BJ (cell line): ENCODE measurements at regions of chr22 and their contacts with region 1.

Region 1: DNA sequence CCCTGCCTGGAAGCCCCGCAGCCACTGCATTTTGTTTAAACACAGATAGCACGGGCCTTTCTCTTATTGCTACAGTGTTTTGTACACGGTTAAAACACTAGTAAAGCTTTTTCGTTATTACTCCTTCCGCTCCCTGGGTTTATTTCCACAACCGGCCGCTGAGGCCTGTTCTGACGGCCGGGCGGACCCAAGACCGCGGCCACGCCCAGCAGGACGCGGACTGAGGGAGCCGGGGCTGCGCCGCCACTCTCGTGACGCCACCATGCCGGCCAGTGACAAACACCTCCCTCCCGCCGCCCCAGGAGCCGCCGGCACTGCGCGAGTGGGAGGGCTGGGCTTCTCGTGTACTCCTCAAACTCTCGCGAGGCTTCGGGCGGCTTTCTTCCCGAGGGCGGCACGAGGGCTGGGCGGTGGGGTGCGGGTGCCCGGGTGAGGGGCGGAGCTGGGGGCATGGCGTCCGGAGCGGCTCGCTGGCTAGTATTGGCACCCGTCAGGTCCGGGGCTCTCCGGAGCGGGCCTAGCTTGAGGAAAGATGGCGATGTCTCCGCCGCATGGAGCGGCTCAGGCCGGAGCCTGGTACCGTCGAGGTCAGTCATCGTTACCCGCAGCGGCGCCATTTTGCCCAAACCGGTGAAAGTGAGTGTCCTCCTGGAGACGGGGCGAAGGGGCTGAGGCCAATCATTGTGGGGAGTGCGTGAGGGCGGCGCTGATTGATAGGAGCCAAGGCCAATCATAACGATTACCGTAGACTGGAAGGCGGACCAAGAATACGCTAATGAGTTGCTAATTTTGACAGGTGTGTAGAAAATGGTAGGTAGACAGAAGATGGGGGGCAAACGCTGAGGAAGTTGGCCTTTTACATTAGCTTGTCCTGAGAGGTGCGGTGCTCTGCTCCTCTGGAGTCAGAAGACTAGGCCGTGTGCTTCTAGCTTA is at the start of gene SMDT1:
- DNase-seq: peak; percentile 78
- H3K4me3 ChIP-seq: peak within 1 kb of the TSS; percentile 80
- H3K27me3 ChIP-seq: no peaks in the 10 kb centered on the region
- CTCF ChIP-seq: no peak
- polyA plus RNA-seq, gene SMDT1: 32.3 and 35.7 TPM in 2 replicates

Region 2: DNA sequence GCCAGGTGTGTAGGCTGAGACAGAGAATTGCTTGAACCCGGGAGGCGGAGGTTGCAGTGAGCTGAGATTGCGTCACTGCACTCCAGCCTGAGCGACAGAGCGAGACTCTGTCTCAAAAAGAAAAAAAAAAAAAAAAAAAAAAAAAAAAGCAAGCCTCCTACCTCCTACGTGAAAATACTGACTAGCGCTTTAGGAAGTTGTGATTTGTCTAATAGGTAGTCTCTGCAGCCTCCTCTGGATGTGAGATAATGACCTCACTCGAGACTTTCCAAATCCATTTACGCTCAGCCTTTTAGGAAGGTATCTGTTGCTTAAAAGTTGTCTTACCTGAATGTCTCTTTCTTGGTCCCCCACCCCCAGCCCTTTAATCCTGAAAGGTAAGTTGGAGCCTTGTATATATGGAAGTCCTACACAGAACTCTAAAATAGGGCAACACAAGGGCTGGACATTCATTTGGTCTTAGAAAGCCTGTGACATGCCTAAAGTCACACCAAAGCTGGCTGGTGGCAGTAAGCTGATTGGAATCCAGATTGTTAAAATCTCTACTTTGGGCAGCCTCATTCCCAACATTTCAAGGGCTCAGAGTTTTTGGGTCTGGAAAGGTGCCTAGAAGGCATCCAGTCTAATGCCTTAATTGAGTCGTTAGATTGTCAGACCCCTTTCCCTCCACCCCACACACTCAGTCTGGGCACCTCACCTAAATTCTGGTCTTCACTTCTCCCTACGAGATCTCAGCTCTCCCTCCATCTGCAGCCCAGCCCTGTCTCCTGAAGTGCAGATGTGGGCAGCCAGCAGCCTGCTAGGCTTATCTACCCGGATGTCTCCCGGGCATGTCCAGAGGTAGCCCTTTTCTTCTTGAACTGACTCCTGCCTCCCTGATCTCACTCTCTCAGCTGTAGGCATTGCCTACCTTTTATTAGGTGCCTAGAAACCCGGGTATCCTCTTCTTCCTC is 104.6 kb before region 1 on chr22:
- CTCF ChIA-PET with region 1: no interaction called
- POLR2A ChIA-PET with region 1: no interaction called
- DNase-seq: no peak
- H3K4me3 ChIP-seq: no peak overlapping the region
- H3K27me3 ChIP-seq: peaks cover 34% of the 10 kb centered on the region
- CTCF ChIP-seq: no peak

Region 3: DNA sequence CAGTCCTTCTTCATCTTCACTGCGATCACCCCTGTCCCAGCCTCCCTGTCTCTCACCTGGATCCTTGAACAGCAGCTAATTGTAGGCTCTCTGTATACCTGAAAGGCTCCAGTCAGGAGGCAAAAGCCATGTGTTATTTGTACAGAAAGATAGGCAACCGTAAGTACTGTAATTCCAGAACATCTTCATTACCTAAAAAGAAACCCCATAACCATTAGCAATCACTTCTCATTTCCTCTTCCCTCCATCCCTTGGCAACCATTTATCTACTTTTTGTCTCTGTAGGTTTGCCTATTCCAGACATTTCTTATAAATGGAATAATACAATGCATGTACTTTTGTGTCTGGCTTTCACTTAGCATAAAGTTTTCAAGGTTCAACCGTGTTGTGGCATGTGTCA is 26.8 kb before region 1 on chr22:
- CTCF ChIA-PET with region 1: no interaction called
- POLR2A ChIA-PET with region 1: no interaction called
- DNase-seq: no peak
- H3K4me3 ChIP-seq: no peak overlapping the region
- H3K27me3 ChIP-seq: no peaks in the 10 kb centered on the region
- CTCF ChIP-seq: no peak

Region 4: DNA sequence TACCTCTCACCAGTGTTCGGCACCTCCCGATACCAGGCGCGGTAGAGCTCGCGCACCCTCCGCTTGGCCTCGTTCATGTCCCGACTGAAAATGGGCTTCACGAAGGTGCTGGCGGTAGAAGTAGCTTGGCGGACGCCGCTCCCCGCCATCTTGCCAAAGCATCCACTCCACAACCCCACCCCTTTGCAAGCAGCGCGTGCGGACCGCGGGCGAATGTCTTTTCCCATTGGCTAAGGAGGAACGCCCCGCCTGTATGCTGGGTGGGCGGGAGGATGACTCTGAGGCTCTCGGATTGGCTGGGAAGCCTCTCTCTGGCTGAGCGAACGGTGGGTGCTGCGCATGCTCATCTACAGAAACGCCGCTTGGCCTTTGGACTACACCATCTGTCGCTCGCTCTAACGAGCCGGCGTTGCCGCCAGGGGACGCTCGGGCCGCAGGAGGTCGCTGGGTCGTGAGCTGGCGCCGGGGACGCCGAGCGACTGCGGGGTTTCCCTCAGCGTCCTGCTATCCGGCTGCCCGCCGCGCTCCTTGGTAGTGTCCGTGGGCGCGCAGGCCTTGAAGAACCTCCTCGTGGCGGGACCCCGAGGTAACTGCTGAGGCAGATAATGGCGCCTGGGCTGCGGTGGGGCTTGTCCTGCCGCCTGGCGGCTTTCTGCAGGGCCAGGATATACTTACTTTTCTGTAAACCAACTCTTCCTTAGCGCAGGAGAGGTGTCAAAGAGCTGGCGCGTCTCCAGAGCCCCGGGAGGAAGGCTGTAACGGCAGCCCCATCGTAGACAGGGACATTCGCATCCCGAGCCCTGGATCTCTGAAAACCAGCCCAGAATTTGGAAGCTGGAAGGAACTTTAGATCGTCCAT is 11.2 kb after region 1 on chr22 and contains the start of gene NDUFA6:
- CTCF ChIA-PET with region 1: interaction called, 18 read pairs
- POLR2A ChIA-PET with region 1: interaction called, 5 read pairs
- DNase-seq: peak; percentile 97
- H3K4me3 ChIP-seq: peak within 1 kb of the TSS; percentile 59
- H3K27me3 ChIP-seq: no peaks in the 10 kb centered on the region
- CTCF ChIP-seq: peak; percentile 92
- polyA plus RNA-seq, gene NDUFA6: 76.0 and 85.6 TPM in 2 replicates

Region 5: DNA sequence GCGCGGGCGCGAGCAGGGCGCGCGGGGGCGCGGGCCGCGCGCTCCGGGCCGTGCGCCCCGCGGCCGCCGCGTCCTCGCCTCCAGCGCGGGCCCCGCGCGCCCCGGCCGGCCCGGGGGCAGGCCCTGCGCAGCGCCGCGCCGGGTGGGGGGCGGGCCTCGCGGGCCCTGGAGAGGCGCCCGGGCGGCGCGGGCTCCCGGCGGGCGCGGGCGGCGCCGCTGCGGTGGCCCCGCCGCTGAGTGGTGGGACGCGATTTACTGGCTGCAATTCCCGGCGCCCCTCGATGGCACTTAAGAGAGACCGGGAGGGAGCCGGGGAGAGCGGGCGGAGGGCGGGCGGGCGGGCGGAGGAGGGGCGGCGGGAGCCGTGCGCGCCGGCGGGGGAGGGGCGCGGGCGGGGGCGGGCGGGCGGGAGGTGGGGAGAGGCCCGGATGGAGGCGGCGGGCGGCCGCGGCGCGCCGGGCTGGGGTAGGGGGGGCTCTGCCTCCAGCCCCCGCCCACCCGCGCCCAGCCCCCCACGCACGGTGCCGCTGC is 264.0 kb after region 1 on chr22:
- CTCF ChIA-PET with region 1: no interaction called
- POLR2A ChIA-PET with region 1: interaction called, 19 read pairs
- DNase-seq: no peak
- H3K4me3 ChIP-seq: peak overlapping the region; percentile 49
- H3K27me3 ChIP-seq: no peaks in the 10 kb centered on the region
- CTCF ChIP-seq: no peak

Region 6: DNA sequence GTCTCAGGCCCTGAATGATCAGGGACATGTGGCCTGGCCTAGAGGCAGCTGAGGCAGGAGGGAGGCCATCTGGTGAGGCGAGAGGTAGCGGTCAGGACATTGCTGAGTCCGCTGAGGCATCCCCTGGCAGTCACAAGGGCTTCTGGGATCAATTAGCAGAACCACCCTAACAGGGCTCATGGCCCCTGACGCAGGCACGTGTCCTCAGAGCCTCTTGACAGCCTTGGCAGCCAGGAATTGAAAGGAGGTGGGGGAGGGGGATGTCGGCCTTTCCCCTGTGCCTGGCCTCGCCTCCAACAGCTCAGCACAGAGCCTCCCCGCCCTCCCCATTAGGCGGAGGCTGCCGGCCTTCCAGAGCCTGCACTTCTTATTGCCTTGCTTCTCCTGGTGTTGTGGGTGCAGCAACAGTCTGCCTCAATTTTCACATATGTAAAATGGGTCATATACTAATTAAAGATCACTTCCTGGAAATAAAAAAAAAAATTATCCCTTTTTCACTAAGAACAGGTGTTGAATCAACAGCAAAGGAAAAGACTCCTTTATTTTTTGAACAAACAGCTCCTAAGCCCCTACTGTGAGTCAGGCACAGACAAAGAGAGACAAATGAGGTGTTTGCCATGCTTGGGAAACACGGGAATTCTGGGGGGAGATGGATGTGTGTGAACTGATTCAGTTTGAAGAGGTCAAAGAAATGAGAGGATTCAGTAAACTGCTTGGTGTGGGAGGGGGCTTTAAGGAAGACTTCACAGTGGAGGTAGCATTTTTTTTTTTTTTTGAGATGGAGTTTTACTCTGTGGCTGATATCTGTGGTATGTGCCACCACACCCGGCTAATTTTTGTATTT is 297.3 kb after region 1 on chr22:
- CTCF ChIA-PET with region 1: no interaction called
- POLR2A ChIA-PET with region 1: interaction called, 29 read pairs
- DNase-seq: peak; percentile 87
- H3K4me3 ChIP-seq: no peak overlapping the region
- H3K27me3 ChIP-seq: no peaks in the 10 kb centered on the region; the same call in 1 of the 2 replicates
- CTCF ChIP-seq: no peak